ENCODE measurements at regions of chr9 and their contacts with region 1.

Region 1: DNA sequence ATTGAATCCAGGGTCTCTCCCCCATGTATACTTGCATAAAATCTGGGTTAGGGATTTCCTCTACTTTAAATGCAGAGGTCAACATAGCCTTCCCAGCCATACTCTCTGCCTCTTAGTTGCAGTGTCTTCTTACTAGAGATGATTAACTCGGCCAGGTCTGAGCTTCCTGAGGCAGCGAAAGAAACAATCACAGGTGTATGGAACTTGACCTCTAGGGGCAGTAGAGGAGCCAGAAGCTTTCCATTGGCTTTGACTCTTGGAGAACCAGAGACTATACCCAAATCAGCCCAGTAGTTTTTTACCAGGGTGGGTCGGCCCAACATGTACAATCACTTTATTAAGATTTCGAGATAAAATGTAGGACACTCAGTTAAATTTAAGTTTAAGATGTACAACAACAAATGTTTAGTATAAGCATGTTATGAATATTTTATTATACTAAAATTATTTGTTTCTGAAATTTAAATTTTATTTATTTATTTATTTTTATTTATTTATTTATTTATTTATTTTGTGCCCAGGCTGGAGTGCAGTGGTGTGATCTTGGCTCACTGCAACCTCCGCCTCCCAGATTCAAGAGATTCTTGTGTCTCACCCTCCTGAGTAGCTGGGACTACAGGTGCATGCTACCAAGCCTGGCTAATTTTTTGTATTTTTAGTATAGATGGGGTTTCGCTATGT is 48.0 kb upstream of the DMRT3 start:
- DNase-seq: peak; percentile 19 to 54
- H3K4me3 ChIP-seq: no peak overlapping the region
- H3K27ac ChIP-seq: no peak overlapping the region
- H3K4me1 ChIP-seq: no peaks in the 10 kb centered on the region
- H3K27me3 ChIP-seq: no peaks in the 10 kb centered on the region
- CTCF ChIP-seq: peak; percentile 30 to 79 (median 64)
- EP300 ChIP-seq: no peak
- POLR2A ChIP-seq: no peak
- RAD21 ChIP-seq: peak; percentile 18 to 49; a peak in 3 of 4 replicates

Region 2: GRCh38 chr9:784202-784601 is 144.3 kb before region 1 on chr9:
- CTCF ChIA-PET with region 1: no interaction called
- POLR2A ChIA-PET with region 1: no interaction called
- DNase-seq: no peak
- H3K4me3 ChIP-seq: no peak overlapping the region
- H3K27ac ChIP-seq: no peak overlapping the region
- H3K4me1 ChIP-seq: peaks cover 0 to 2% (median under 1%) of the 10 kb centered on the region in 4 experiments; a peak in 2 of 7 replicates
- H3K27me3 ChIP-seq: no peaks in the 10 kb centered on the region
- CTCF ChIP-seq: no peak
- EP300 ChIP-seq: no peak
- POLR2A ChIP-seq: no peak
- RAD21 ChIP-seq: no peak

Region 3: GRCh38 chr9:882478-882877 is 46.0 kb before region 1 on chr9:
- CTCF ChIA-PET with region 1: interaction called, 11 read pairs
- POLR2A ChIA-PET with region 1: no interaction called
- DNase-seq: no peak
- H3K4me3 ChIP-seq: no peak overlapping the region
- H3K27ac ChIP-seq: no peak overlapping the region
- H3K4me1 ChIP-seq: no peaks in the 10 kb centered on the region
- H3K27me3 ChIP-seq: no peaks in the 10 kb centered on the region
- CTCF ChIP-seq: peak in 2 of 3 experiments; percentile 16 to 46; a peak in 2 of 4 replicates
- EP300 ChIP-seq: no peak
- POLR2A ChIP-seq: no peak
- RAD21 ChIP-seq: no peak

Region 4: GRCh38 chr9:899440-900184 is 28.9 kb before region 1 on chr9:
- CTCF ChIA-PET with region 1: interaction called, 85 read pairs
- POLR2A ChIA-PET with region 1: no interaction called
- DNase-seq: no peak
- H3K4me3 ChIP-seq: 0 out of 8 replicates have a peak overlapping the region, but pooled peaks of 1 of the 4 experiments have one; percentile 11
- H3K27ac ChIP-seq: no peak overlapping the region
- H3K4me1 ChIP-seq: peaks cover 1 to 13% (median 10%) of the 10 kb centered on the region in 4 experiments; a peak in 4 of 7 replicates
- H3K27me3 ChIP-seq: no peaks in the 10 kb centered on the region; a peak in 1 of 7 replicates
- CTCF ChIP-seq: no peak
- EP300 ChIP-seq: no peak
- POLR2A ChIP-seq: no peak
- RAD21 ChIP-seq: no peak

Region 5: DNA sequence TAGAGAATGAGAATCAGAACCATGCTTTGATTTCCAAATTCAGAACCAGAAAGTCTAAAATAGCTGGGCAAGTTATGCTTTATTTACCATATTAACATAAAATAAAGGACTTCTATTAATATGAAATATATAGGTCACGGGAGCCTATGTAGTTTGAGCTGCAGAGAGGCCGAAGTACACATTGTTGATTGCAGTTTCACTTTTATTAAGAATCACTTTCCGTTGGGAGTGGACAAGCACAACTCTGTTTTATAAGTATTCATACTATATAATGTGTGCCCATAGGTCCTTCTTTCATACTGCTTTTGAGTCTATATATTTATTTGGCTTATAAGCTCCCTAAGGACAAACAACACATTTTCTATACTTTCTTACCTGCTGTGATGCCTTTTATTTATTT is 10.8 kb before region 1 on chr9:
- CTCF ChIA-PET with region 1: interaction called, 29 read pairs
- POLR2A ChIA-PET with region 1: no interaction called
- DNase-seq: no peak
- H3K4me3 ChIP-seq: no peak overlapping the region
- H3K27ac ChIP-seq: no peak overlapping the region
- H3K4me1 ChIP-seq: peaks cover 0 to 2% (median 0%) of the 10 kb centered on the region in 4 experiments; a peak in 1 of 7 replicates
- H3K27me3 ChIP-seq: no peaks in the 10 kb centered on the region
- CTCF ChIP-seq: no peak
- EP300 ChIP-seq: no peak
- POLR2A ChIP-seq: no peak
- RAD21 ChIP-seq: no peak

Region 6: DNA sequence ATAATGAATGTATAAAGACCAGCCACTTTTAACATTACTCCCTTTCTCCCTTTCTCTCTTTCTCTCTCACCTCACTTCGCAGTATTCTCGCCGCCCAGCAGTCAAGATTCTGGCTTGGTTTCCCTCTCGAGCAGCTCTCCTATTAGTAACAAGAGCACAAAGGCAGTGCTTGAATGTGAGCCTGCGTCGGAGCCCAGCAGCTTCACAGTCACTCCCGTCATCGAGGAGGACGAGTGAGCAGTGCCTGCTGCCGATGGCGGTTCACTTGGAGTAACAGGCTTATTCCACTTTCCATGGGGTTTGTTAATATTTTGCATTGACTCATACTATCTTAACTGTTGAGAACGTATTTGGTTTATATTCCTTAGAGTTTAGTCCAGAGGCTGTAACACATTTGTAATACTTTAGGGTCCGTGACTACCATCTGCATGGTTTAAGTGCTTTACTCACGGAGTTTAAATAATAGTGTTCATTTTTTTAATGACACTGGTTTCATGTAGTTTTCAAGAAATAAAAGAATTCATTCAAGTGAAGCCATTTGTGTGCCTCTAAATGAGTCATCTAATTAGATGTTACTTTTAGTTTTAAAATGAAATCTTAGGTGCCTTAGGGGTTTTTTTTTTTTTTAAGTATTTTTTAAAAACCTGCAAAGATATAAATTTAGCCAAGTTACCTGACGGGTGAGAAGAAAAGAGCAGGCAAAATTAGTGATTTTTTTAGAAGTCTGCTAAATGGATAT is 39.6 kb after region 1 on chr9:
- CTCF ChIA-PET with region 1: interaction called, 12 read pairs
- POLR2A ChIA-PET with region 1: no interaction called
- DNase-seq: peak in 1 of 2 experiments; percentile 53
- H3K4me3 ChIP-seq: peak overlapping the region in 1 of 4 experiments; percentile 44; a peak in 3 of 8 replicates
- H3K27ac ChIP-seq: no peak overlapping the region
- H3K4me1 ChIP-seq: peaks cover 5 to 12% (median 9%) of the 10 kb centered on the region in 4 experiments
- H3K27me3 ChIP-seq: peaks cover 32 to 56% (median 44%) of the 10 kb centered on the region in 4 experiments; a peak in 6 of 7 replicates
- CTCF ChIP-seq: no peak
- EP300 ChIP-seq: no peak
- POLR2A ChIP-seq: no peak
- RAD21 ChIP-seq: no peak

Region 7: GRCh38 chr9:982394-983230 is 54.1 kb after region 1 on chr9:
- CTCF ChIA-PET with region 1: interaction called, 23 read pairs
- POLR2A ChIA-PET with region 1: no interaction called
- DNase-seq: no peak
- H3K4me3 ChIP-seq: no peak overlapping the region
- H3K27ac ChIP-seq: no peak overlapping the region
- H3K4me1 ChIP-seq: peaks cover under 1 to 9% (median 4%) of the 10 kb centered on the region in 4 experiments; a peak in 4 of 7 replicates
- H3K27me3 ChIP-seq: peaks cover 35 to 63% (median 55%) of the 10 kb centered on the region in 4 experiments
- CTCF ChIP-seq: no peak
- EP300 ChIP-seq: no peak
- POLR2A ChIP-seq: no peak
- RAD21 ChIP-seq: no peak

Measured in H1 (cell line).